PC-3 (cell line): ENCODE measurements at regions of chr3 and their contacts with region 1.

Region 1: DNA sequence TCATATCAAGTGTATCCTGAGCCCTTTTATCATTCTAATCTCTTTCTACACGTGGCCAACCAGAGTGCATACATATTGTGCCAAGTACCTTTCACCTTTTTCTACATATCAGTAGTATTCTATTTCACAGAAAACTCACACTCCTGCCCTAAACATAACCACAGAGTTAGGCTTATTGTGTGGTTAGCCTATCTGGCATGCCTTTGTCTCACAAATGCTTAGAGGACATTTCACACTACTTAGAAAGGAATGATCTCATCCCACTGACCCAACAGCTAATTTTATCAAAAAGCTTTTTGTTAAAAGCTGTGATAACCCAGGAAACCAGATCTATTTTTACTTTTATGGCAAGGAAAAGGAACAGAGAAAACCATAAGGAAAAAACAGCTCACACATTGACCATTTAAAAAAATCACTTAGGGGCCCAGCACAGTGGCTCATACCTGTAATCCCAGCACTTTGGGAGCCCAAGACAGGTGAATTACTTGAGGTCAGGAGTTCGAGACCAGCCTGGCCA is 17.8 kb upstream of the MAP4 start:
- DNase-seq: peak; percentile 66
- ATAC-seq: peak; percentile 89
- H3K4me3 ChIP-seq: no peak overlapping the region
- H3K27ac ChIP-seq: peak overlapping the region; percentile 20
- H3K4me1 ChIP-seq: peaks cover 18% of the 10 kb centered on the region
- H3K27me3 ChIP-seq: no peaks in the 10 kb centered on the region
- CTCF ChIP-seq: no peak

Region 2: GRCh38 chr3:47964740-47965139 is 69.3 kb before region 1 on chr3:
- CTCF ChIA-PET with region 1: no interaction called
- POLR2A ChIA-PET with region 1: no interaction called
- intact Hi-C with region 1: no loop called
- DNase-seq: no peak
- ATAC-seq: no peak
- H3K4me3 ChIP-seq: no peak overlapping the region
- H3K27ac ChIP-seq: no peak overlapping the region
- H3K4me1 ChIP-seq: peaks cover 6% of the 10 kb centered on the region; the same call in 1 of the 2 replicates
- H3K27me3 ChIP-seq: no peaks in the 10 kb centered on the region
- CTCF ChIP-seq: no peak

Region 3: GRCh38 chr3:48088749-48089466 is 54.9 kb after region 1 on chr3:
- CTCF ChIA-PET with region 1: no interaction called
- POLR2A ChIA-PET with region 1: interaction called, 4 read pairs
- intact Hi-C with region 1: loop called (anchors 5 kb)
- DNase-seq: peak; percentile 98
- ATAC-seq: peak; percentile 87
- H3K4me3 ChIP-seq: peak overlapping the region; percentile 84
- H3K27ac ChIP-seq: peak overlapping the region; percentile 97
- H3K4me1 ChIP-seq: peaks cover 32% of the 10 kb centered on the region
- H3K27me3 ChIP-seq: no peaks in the 10 kb centered on the region
- CTCF ChIP-seq: no peak

Region 4: GRCh38 chr3:48112813-48113212 is 78.8 kb after region 1 on chr3:
- CTCF ChIA-PET with region 1: no interaction called
- POLR2A ChIA-PET with region 1: no interaction called
- intact Hi-C with region 1: no loop called
- DNase-seq: no peak
- ATAC-seq: no peak
- H3K4me3 ChIP-seq: no peak overlapping the region
- H3K27ac ChIP-seq: no peak overlapping the region
- H3K4me1 ChIP-seq: no peaks in the 10 kb centered on the region
- H3K27me3 ChIP-seq: no peaks in the 10 kb centered on the region
- CTCF ChIP-seq: no peak

Region 5: DNA sequence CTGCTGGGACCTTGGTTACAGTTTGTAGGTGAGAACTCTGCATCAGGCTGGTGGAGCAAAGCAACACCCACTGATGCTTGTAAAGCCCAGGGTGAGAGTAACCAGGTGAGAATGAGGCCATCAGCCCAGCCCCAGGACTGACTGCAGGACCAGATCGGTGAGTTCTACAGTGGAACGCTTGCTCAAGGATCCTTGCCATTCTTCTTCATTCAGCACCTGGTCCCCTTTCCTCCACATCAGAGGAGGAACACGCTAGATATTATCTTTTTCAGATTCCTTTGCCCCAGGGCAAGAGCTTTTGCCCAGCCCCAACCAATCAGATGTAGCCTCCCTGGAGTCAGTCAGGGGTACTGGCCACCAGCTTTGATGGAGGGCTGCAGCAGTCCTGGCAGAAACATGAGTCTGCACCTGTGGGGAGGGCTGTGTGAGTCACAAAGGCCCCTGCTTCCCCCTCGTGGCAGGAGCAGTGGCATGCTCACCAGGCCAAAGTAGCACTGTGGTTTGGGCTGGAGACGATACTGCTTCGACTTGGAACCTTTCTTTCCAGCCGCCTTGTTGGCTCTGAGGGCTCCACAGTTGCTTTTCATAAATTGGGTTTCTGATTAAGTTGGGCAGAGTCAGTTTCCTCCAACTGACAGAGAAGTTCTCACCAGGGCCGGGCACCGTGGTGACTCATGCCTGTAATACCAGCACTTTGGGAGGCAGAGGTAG is 473.4 kb after region 1 on chr3:
- CTCF ChIA-PET with region 1: no interaction called
- POLR2A ChIA-PET with region 1: no interaction called
- intact Hi-C with region 1: no loop called
- DNase-seq: peak; percentile 98
- ATAC-seq: peak; percentile 68
- H3K4me3 ChIP-seq: peak overlapping the region; percentile 44; the same call in 1 of the 2 replicates
- H3K27ac ChIP-seq: peak overlapping the region; percentile 97
- H3K4me1 ChIP-seq: peaks cover 54% of the 10 kb centered on the region
- H3K27me3 ChIP-seq: no peaks in the 10 kb centered on the region
- CTCF ChIP-seq: peak; percentile 66